IMR-90 (cell line): ENCODE measurements at regions of chr4 and their contacts with region 1.

Region 1: GRCh38 chr4:158051401-158052235 is 121.2 kb downstream of the GASK1B start:
- DNase-seq: peak; percentile 94
- ATAC-seq: peak; percentile 95
- H3K4me3 ChIP-seq: no peak overlapping the region
- H3K27ac ChIP-seq: peak overlapping the region; percentile 84; the same call in 1 of the 2 replicates
- H3K4me1 ChIP-seq: peaks cover 3% of the 10 kb centered on the region
- H3K27me3 ChIP-seq: no peaks in the 10 kb centered on the region
- CTCF ChIP-seq: no peak
- POLR2A ChIP-seq: no peak
- RAD21 ChIP-seq: no peak

Region 2: DNA sequence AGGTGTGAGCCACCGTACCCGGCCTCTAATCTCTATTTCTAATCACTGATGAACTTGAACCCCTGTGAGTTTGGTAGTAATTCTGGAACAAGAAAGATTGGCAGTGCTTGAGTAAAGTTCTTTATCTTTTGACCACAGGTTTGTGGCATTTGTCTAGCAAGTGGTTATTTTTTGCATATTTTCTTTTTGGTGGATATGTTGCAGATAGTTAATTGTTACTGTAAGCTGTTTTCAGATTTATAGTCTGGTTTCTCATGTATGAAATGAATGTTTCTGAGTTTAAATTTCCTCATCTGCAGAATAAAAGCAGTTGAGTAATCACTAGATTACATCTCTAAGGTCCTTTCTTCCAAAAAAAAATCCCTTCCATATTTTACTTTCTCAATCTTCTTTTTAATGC is 16.0 kb after region 1 on chr4:
- CTCF ChIA-PET with region 1: no interaction called
- POLR2A ChIA-PET with region 1: no interaction called
- dilution Hi-C with region 1: no loop called
- in situ Hi-C with region 1: no loop called
- intact Hi-C with region 1: loop called (anchors 2 kb)
- DNase-seq: no peak
- ATAC-seq: no peak
- H3K4me3 ChIP-seq: no peak overlapping the region
- H3K27ac ChIP-seq: no peak overlapping the region; the same call in 1 of the 2 replicates
- H3K4me1 ChIP-seq: peaks cover 2% of the 10 kb centered on the region; the same call in 1 of the 2 replicates
- H3K27me3 ChIP-seq: no peaks in the 10 kb centered on the region
- CTCF ChIP-seq: no peak
- POLR2A ChIP-seq: no peak
- RAD21 ChIP-seq: no peak

Region 3: DNA sequence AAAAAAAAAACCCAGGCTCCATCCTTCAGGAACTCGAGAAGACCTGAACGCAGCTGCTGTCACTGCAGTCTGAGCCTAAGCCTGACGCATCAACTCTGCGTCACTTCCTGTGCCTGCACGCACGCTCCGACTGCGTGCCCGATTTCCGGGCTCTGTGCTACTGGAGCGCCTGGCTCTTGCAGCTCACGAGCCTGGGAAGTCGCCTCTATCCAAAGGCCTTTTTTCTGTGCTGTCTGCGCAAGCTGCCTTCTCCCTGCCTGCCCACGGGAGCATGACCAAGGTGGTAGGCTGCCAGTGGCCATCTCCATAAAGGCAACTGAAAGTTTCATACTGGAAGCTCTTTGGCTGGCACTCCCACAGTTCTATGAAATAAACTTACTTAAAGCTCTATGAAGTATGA is 131.1 kb after region 1 on chr4:
- CTCF ChIA-PET with region 1: no interaction called
- POLR2A ChIA-PET with region 1: no interaction called
- dilution Hi-C with region 1: no loop called
- in situ Hi-C with region 1: no loop called
- intact Hi-C with region 1: no loop called
- DNase-seq: no peak
- ATAC-seq: no peak
- H3K4me3 ChIP-seq: no peak overlapping the region
- H3K27ac ChIP-seq: no peak overlapping the region
- H3K4me1 ChIP-seq: no peaks in the 10 kb centered on the region
- H3K27me3 ChIP-seq: no peaks in the 10 kb centered on the region; the same call in 1 of the 2 replicates
- CTCF ChIP-seq: no peak
- POLR2A ChIP-seq: no peak
- RAD21 ChIP-seq: no peak